ENCODE measurements at regions of chr4 and their contacts with region 1.

Region 1: GRCh38 chr4:102344954-102345794 is at the start of gene SLC39A8:
- DNase-seq: peak; percentile 92
- H3K4me3 ChIP-seq: peak within 1 kb of the TSS; percentile 49 to 66 (median 56)
- H3K27ac ChIP-seq: peak within 1 kb of the TSS; percentile 49 to 76 (median 66)
- H3K4me1 ChIP-seq: peaks cover 0 to 16% (median 10%) of the 10 kb centered on the region in 4 donors
- H3K27me3 ChIP-seq: no peaks in the 10 kb centered on the region
- CTCF ChIP-seq: peak; percentile 64 to 83 (median 72)
- EP300 ChIP-seq: no peak
- POLR2A ChIP-seq: peak in 1 of 2 donors; percentile 41
- total RNA-seq, gene SLC39A8: 3.2 to 7.7 (median 5.6) TPM

Region 2: DNA sequence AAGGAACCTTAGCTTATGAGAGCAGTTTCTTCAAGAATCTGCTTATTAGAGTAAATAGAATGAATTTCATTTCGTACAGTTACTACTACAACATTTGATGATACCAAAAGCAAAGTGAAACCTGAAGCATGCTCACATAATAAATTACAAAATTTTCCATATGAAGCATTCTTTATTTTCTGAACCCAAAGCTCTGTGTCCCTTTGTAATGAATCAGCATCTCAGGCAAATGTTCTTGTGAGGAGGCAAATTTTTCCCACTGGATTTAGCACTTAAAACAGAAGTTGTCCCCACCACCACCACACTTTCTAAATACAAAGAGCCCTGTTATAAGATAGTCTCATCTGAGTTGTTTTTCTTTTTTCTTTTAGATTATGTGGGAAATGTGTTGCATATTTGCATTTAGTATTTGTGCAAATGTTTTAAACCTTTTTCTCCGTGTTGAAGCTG is 85.3 kb after region 1 on chr4:
- intact Hi-C with region 1: loop called (anchors 2 kb)
- DNase-seq: no peak
- H3K4me3 ChIP-seq: peak overlapping the region; percentile 45 to 58 (median 54)
- H3K27ac ChIP-seq: peak overlapping the region; percentile 60 to 76 (median 63)
- H3K4me1 ChIP-seq: no peaks in the 10 kb centered on the region
- H3K27me3 ChIP-seq: no peaks in the 10 kb centered on the region
- CTCF ChIP-seq: no peak
- EP300 ChIP-seq: no peak
- POLR2A ChIP-seq: no peak

Measured in sigmoid colon (tissue), 7 donors.